GM10248 (cell line): ENCODE measurements at regions of chr15 and their contacts with region 1.

Region 1: GRCh38 chr15:76330080-76330680 is 6.4 kb upstream of the ISL2 start:
- DNase-seq: no peak
- CTCF ChIP-seq: peak; percentile 30

Region 2: DNA sequence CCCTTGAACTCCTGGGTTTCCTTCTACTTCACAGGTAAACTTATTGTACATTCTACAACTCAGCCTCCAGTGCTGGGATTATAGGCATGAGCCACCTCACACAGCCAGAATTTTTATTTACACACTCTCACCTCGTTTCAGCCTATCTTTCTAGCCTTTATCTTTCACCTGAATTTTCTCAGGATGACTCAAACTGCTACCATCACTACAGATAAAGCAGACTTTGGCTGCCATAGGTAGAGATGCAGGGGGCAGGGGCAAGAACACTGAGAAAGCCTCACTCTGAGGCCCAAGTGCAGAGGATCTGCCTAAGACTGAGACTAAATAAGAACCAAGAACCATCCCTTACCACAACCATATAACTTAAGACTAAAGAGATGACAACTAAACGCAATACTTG is 77.9 kb before region 1 on chr15:
- CTCF ChIA-PET with region 1: no interaction called
- POLR2A ChIA-PET with region 1: no interaction called
- DNase-seq: no peak
- CTCF ChIP-seq: no peak

Region 3: GRCh38 chr15:76340803-76341365 is 10.7 kb after region 1 on chr15:
- CTCF ChIA-PET with region 1: interaction called, 17 read pairs
- POLR2A ChIA-PET with region 1: no interaction called
- DNase-seq: peak; percentile 58
- CTCF ChIP-seq: peak; percentile 42

Region 4: DNA sequence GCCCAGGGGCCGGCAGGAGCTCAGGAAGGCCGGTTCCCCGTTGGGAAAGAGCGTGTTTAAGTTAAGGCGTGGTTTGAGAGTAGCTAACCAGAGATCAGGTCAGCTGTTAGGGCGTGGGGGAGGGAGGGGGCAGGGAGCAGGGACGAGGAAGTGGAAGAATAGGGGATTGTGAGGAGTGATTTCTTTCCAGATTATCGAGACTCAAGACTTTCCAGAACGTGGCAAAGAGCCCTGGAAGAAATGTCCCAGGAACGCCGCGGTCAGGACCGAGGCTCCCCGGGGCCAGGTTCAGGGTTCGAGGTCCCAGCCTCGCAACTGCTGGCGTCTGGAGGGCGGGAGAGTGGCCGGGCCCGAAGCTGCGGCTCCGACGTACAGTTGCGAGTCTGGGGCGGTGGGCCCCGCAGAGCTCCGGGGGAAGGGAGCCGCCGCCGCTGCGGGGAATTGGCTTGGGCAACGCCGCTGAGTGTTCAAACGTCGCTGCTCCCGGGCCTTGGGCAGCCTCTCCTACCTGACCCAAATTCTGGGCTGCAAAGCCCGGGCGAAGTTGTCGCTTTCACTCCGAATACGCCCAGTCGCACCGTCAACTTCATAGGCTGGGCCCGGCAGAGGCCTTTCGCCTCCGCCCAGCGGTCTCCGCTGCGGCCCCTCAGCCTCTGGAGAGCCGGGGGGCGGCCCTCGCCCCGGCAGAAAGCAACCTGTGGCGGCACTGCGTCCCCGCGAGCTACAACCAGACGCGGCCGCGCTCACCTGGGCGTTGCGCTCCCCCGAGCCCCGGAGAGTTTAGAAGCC is 15.9 kb after region 1 on chr15:
- CTCF ChIA-PET with region 1: interaction called, 17 read pairs
- POLR2A ChIA-PET with region 1: no interaction called
- DNase-seq: peak; percentile 69
- CTCF ChIP-seq: no peak